ENCODE measurements at regions of chr4 and their contacts with region 1.

Region 1: GRCh38 chr4:152735396-152735859 is 44.1 kb downstream of the TIGD4 start:
- DNase-seq: no peak
- H3K4me3 Mint-ChIP-seq: no peak overlapping the region
- H3K27ac Mint-ChIP-seq: no peak overlapping the region
- H3K4me1 Mint-ChIP-seq: peaks cover 2% of the 10 kb centered on the region
- H3K27me3 Mint-ChIP-seq: peaks cover 8% of the 10 kb centered on the region

Region 2: GRCh38 chr4:152408514-152409327 is 326.7 kb before region 1 on chr4:
- intact Hi-C with region 1: loop called (anchors 5 kb)
- DNase-seq: peak; percentile 73
- H3K4me3 Mint-ChIP-seq: no peak overlapping the region
- H3K27ac Mint-ChIP-seq: no peak overlapping the region
- H3K4me1 Mint-ChIP-seq: peaks cover 4% of the 10 kb centered on the region
- H3K27me3 Mint-ChIP-seq: no peaks in the 10 kb centered on the region

Region 3: GRCh38 chr4:152500800-152501434 is 234.5 kb before region 1 on chr4:
- intact Hi-C with region 1: loop called (anchors 2 kb)
- DNase-seq: peak; percentile 92
- H3K4me3 Mint-ChIP-seq: no peak overlapping the region
- H3K27ac Mint-ChIP-seq: no peak overlapping the region
- H3K4me1 Mint-ChIP-seq: peaks cover 26% of the 10 kb centered on the region
- H3K27me3 Mint-ChIP-seq: no peaks in the 10 kb centered on the region

Region 4: GRCh38 chr4:152585023-152585441 is 150.4 kb before region 1 on chr4:
- intact Hi-C with region 1: no loop called
- DNase-seq: no peak
- H3K4me3 Mint-ChIP-seq: peak overlapping the region; percentile 64
- H3K27ac Mint-ChIP-seq: peak overlapping the region; percentile 81
- H3K4me1 Mint-ChIP-seq: peaks cover 7% of the 10 kb centered on the region
- H3K27me3 Mint-ChIP-seq: peaks cover 17% of the 10 kb centered on the region

Measured in activated CD4-positive, alpha-beta T cell treated with anti-CD3 and anti-CD28 coated beads, Interleukin-2, amount 10 ng/mL, durations not matched to agents 24 days and 14 days (primary cell).